ENCODE measurements at regions of chrX and their contacts with region 1.

Region 1: GRCh38 chrX:41796577-41796976 is 72.6 kb downstream of the GPR82 start:
- DNase-seq: no peak
- H3K4me3 ChIP-seq: no peak overlapping the region
- H3K27ac ChIP-seq: no peak overlapping the region
- H3K4me1 ChIP-seq: no peaks in the 10 kb centered on the region
- H3K27me3 ChIP-seq: no peaks in the 10 kb centered on the region
- CTCF ChIP-seq: no peak

Region 2: GRCh38 chrX:41538707-41539106 is 257.9 kb before region 1 on chrX:
- CTCF ChIA-PET with region 1: no interaction called
- POLR2A ChIA-PET with region 1: no interaction called
- intact Hi-C with region 1: no loop called
- DNase-seq: no peak
- H3K4me3 ChIP-seq: no peak overlapping the region
- H3K27ac ChIP-seq: no peak overlapping the region
- H3K4me1 ChIP-seq: no peaks in the 10 kb centered on the region
- H3K27me3 ChIP-seq: no peaks in the 10 kb centered on the region
- CTCF ChIP-seq: no peak

Region 3: GRCh38 chrX:41906515-41907165 is 110.1 kb after region 1 on chrX:
- CTCF ChIA-PET with region 1: no interaction called
- POLR2A ChIA-PET with region 1: no interaction called
- intact Hi-C with region 1: no loop called
- DNase-seq: peak; percentile 4 to 71
- H3K4me3 ChIP-seq: peak overlapping the region; percentile 14; the same call in 1 of the 2 replicates
- H3K27ac ChIP-seq: peak overlapping the region; percentile 90
- H3K4me1 ChIP-seq: peaks cover 21% of the 10 kb centered on the region
- H3K27me3 ChIP-seq: no peaks in the 10 kb centered on the region
- CTCF ChIP-seq: no peak

Region 4: DNA sequence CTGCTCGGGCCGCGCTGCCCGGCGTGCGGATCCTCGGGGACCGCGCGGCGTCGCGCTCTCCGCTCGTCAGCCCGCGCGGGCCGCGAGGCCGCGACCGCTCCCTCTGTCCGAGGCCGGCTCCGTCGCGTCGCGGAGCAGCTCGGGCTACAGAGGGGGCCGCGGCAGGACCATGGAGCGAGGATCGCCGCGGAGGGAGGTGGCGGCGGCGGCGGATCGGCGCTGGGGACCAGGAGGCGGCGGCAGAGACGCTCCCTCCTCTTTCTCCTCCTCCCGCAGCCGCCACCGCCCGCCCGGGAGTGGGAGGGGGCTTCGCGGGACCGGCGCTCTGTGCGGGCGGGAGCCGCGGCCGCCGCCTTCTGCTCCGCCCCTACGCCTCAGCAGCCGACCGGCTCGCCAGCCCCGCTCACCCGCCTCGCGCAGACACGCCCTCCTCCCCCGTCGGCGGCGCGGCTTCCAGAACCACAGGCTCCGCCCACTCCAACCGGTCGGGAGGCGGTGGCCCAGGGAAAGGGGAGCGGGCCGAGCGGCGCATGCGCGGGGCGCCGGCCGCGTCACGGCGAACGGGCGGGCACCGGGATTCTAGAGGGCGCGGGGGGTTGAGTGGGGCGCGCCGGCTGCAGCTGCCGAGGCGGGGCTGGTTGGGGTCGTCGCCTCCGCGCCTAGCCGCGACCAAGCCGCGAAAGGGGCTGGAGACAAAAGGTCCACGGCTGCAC is 126.8 kb after region 1 on chrX and contains the start of gene CASK:
- CTCF ChIA-PET with region 1: no interaction called
- POLR2A ChIA-PET with region 1: no interaction called
- intact Hi-C with region 1: loop called (anchors 10 kb)
- DNase-seq: peak; percentile 71 to 86
- H3K4me3 ChIP-seq: peak within 1 kb of the TSS; percentile 58
- H3K27ac ChIP-seq: peak within 1 kb of the TSS; percentile 39; the same call in 1 of the 2 replicates
- H3K4me1 ChIP-seq: no peaks in the 10 kb centered on the region
- H3K27me3 ChIP-seq: no peaks in the 10 kb centered on the region
- CTCF ChIP-seq: no peak
- total RNA-seq, gene CASK: 25.9 and 29.4 TPM in 2 replicates

Measured in PC-9 (cell line).